ENCODE measurements at regions of chr17 and their contacts with region 1.

Region 1: GRCh38 chr17:76182016-76182764 is 41.1 kb upstream of the FOXJ1 start:
- DNase-seq: peak; percentile 97
- ATAC-seq: peak; percentile 87
- H3K4me3 Mint-ChIP-seq: no peak overlapping the region
- H3K27ac Mint-ChIP-seq: peak overlapping the region; percentile 87
- H3K4me1 Mint-ChIP-seq: peaks cover 72% of the 10 kb centered on the region
- H3K27me3 Mint-ChIP-seq: no peaks in the 10 kb centered on the region

Region 2: GRCh38 chr17:76141212-76142038 is 40.8 kb before region 1 on chr17 and contains the start of gene FOXJ1:
- CTCF ChIA-PET with region 1: interaction called, 106 read pairs
- POLR2A ChIA-PET with region 1: interaction called, 61 read pairs
- DNase-seq: peak; percentile 94
- ATAC-seq: peak; percentile 55
- H3K4me3 Mint-ChIP-seq: peak within 1 kb of the TSS; percentile 76
- H3K27ac Mint-ChIP-seq: peak within 1 kb of the TSS; percentile 97
- H3K4me1 Mint-ChIP-seq: peaks cover 72% of the 10 kb centered on the region
- H3K27me3 Mint-ChIP-seq: no peaks in the 10 kb centered on the region
- total RNA-seq, gene FOXJ1: 8.7 to 9.1 TPM

Region 3: GRCh38 chr17:76153640-76154039 is 28.6 kb before region 1 on chr17:
- CTCF ChIA-PET with region 1: interaction called, 51 read pairs
- POLR2A ChIA-PET with region 1: interaction called, 10 read pairs
- DNase-seq: no peak
- ATAC-seq: no peak
- H3K4me3 Mint-ChIP-seq: no peak overlapping the region
- H3K27ac Mint-ChIP-seq: peak overlapping the region; percentile 43
- H3K4me1 Mint-ChIP-seq: peaks cover 41% of the 10 kb centered on the region
- H3K27me3 Mint-ChIP-seq: no peaks in the 10 kb centered on the region

Region 4: DNA sequence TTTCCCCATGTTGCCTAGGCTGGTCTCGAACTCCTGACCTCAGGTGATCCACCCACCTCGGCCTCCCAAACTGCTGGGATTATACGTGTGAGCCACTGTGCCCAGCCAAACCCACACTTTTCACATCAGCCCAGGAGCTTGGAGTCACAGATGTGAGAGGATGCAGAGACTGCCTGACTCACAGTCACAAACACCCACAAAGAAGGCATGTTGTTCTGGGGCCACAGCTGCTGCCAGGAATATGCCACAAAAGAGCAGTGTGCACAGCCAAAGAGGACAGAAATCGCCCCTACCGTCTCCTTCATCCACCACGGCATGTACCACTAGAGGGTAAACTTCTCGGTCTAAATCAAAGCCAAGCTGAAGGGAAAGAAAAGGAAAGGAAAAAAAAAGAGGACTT is 16.0 kb before region 1 on chr17:
- CTCF ChIA-PET with region 1: interaction called, 22 read pairs
- POLR2A ChIA-PET with region 1: interaction called, 3 read pairs
- DNase-seq: no peak
- ATAC-seq: no peak
- H3K4me3 Mint-ChIP-seq: no peak overlapping the region
- H3K27ac Mint-ChIP-seq: peak overlapping the region; percentile 50
- H3K4me1 Mint-ChIP-seq: no peaks in the 10 kb centered on the region
- H3K27me3 Mint-ChIP-seq: no peaks in the 10 kb centered on the region

Region 5: DNA sequence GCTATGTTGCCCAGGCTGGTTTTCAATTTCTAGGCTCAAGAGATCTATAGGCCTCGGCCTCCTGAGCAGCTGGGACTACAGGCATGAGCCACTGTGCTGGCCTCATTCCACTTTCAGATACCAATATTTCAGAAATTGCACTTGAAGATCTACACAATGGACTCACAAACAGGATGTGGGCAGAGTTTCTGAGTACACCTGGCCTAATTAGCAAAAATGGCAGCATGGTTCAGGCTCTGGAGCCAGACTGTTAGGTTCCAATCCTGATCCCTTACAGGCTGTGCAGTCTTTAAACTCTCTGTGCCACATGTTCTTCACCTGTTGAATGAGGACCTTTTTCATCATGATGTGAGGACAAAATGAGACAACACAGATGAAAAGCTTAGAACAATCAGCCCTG is 25.9 kb after region 1 on chr17:
- CTCF ChIA-PET with region 1: interaction called, 27 read pairs
- POLR2A ChIA-PET with region 1: interaction called, 4 read pairs
- DNase-seq: peak; percentile 50
- ATAC-seq: peak; percentile 67
- H3K4me3 Mint-ChIP-seq: peak overlapping the region; percentile 15
- H3K27ac Mint-ChIP-seq: peak overlapping the region; percentile 74
- H3K4me1 Mint-ChIP-seq: peaks cover 75% of the 10 kb centered on the region
- H3K27me3 Mint-ChIP-seq: no peaks in the 10 kb centered on the region

Region 6: GRCh38 chr17:76252040-76252954 is 70.1 kb after region 1 on chr17:
- CTCF ChIA-PET with region 1: interaction called, 16 read pairs
- POLR2A ChIA-PET with region 1: interaction called, 14 read pairs
- DNase-seq: peak; percentile 65
- ATAC-seq: peak; percentile 72
- H3K4me3 Mint-ChIP-seq: peak overlapping the region; percentile 77
- H3K27ac Mint-ChIP-seq: peak overlapping the region; percentile 96
- H3K4me1 Mint-ChIP-seq: peaks cover 77% of the 10 kb centered on the region
- H3K27me3 Mint-ChIP-seq: no peaks in the 10 kb centered on the region

Region 7: GRCh38 chr17:76473541-76473985 is 291.4 kb after region 1 on chr17:
- CTCF ChIA-PET with region 1: no interaction called
- POLR2A ChIA-PET with region 1: no interaction called
- DNase-seq: peak; percentile 33
- ATAC-seq: peak; percentile 32
- H3K4me3 Mint-ChIP-seq: no peak overlapping the region
- H3K27ac Mint-ChIP-seq: no peak overlapping the region
- H3K4me1 Mint-ChIP-seq: no peaks in the 10 kb centered on the region
- H3K27me3 Mint-ChIP-seq: no peaks in the 10 kb centered on the region